A673 (cell line): ENCODE measurements at regions of chr5 and their contacts with region 1.

Region 1: DNA sequence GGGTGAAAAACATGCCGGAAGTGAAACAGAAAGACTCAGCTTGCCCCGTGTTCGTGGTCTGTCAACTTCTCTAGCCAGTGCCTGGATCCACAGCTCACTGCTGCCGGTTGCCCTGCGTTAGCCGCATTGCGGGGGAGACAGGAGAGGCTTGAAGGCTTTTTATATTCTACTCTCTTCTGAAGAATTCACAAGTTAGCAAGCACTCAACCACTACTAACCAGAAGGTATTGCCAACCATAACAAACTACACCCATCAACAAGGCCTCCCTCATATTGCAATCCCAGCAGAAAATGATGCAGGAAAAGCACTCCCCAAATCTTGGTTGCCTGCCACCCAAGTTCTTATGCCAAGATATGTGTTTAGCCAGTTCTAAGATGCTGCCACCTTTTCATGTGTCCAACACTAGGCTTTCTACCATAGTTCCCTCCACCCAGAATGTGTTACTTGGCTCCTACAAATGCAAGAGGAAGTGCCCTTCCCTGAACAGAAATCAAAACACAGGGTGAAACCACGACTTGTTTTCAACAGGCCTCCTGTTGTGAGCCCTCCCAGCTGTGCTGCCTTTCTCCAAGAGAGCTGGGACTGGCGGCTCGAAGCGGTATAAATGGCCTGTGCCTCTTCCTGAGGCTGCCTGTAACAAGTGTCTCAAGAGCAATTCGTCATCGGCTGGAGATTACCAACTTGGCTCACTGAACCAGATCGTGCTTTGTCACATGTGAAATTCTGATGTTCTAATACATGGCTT is 129.0 kb downstream of the SNX18 start:
- DNase-seq: peak; percentile 96
- H3K4me3 ChIP-seq: no peak overlapping the region
- H3K27ac ChIP-seq: peak overlapping the region; percentile 75
- H3K4me1 ChIP-seq: peaks cover 64% of the 10 kb centered on the region
- H3K27me3 ChIP-seq: no peaks in the 10 kb centered on the region
- CTCF ChIP-seq: no peak

Region 2: GRCh38 chr5:54774281-54775170 is 128.0 kb after region 1 on chr5:
- CTCF ChIA-PET with region 1: no interaction called
- POLR2A ChIA-PET with region 1: no interaction called
- intact Hi-C with region 1: no loop called
- DNase-seq: no peak
- H3K4me3 ChIP-seq: no peak overlapping the region
- H3K27ac ChIP-seq: no peak overlapping the region
- H3K4me1 ChIP-seq: no peaks in the 10 kb centered on the region
- H3K27me3 ChIP-seq: no peaks in the 10 kb centered on the region
- CTCF ChIP-seq: no peak

Region 3: GRCh38 chr5:54832045-54832444 is 185.5 kb after region 1 on chr5:
- CTCF ChIA-PET with region 1: no interaction called
- POLR2A ChIA-PET with region 1: interaction called, 12 read pairs
- intact Hi-C with region 1: no loop called
- DNase-seq: no peak
- H3K4me3 ChIP-seq: no peak overlapping the region
- H3K27ac ChIP-seq: no peak overlapping the region
- H3K4me1 ChIP-seq: no peaks in the 10 kb centered on the region
- H3K27me3 ChIP-seq: no peaks in the 10 kb centered on the region
- CTCF ChIP-seq: no peak